Aorta (tissue), 5 donors: ENCODE measurements at regions of chr10 and their contacts with region 1.

Region 1: DNA sequence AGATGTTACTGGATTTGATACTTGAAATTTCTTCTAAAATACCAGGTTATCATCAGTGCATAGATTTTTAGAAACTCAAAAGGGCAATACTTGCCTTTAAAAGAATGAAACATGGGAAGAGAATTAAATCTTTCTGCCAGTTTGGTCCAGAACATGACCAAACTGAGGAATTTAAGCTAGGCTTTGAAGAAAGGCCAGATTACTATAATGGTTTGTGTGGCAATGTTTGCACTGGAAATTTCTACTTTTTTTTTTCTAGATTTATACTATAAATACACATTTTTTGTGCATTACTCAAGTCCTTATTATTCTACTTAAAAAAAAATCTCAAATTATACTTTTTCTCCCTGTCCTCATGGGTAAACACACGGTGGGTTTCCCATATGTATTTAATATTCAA is 9.2 kb downstream of the MKX start:
- DNase-seq: no peak
- ATAC-seq: no peak
- H3K4me3 ChIP-seq: no peak overlapping the region
- H3K27ac ChIP-seq: no peak overlapping the region
- H3K4me1 ChIP-seq: peaks cover 1 to 5% of the 10 kb centered on the region in 2 donors
- H3K27me3 ChIP-seq: no peaks in the 10 kb centered on the region

Region 2: GRCh38 chr10:27699776-27700175 is 36.6 kb before region 1 on chr10:
- intact Hi-C with region 1: no loop called
- DNase-seq: no peak
- ATAC-seq: no peak
- H3K4me3 ChIP-seq: no peak overlapping the region
- H3K27ac ChIP-seq: no peak overlapping the region
- H3K4me1 ChIP-seq: peaks cover 0 to 4% of the 10 kb centered on the region in 2 donors
- H3K27me3 ChIP-seq: no peaks in the 10 kb centered on the region

Region 3: DNA sequence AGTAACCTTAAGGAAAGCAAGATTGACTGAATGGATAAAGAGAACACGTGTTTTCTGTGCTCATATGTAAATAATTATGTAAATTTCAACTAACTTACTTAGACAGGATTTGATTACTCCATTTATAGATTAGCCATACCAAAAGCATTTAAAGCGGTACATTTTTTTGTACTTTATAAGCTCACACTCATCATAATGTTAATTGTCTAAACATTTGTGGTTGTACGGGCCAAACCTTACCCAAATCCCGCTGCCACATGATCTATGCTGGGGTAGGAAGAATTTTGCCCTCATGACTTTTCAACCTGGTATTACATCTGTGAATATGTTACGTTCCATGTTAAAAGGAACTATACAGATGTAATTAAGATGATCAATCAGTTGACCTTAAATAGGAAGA is 19.9 kb before region 1 on chr10:
- intact Hi-C with region 1: loop called in 1 of 2 experiments (anchors 2 kb)
- DNase-seq: no peak
- ATAC-seq: no peak
- H3K4me3 ChIP-seq: no peak overlapping the region
- H3K27ac ChIP-seq: no peak overlapping the region
- H3K4me1 ChIP-seq: peaks cover 7 to 17% of the 10 kb centered on the region in 2 donors
- H3K27me3 ChIP-seq: no peaks in the 10 kb centered on the region

Region 4: DNA sequence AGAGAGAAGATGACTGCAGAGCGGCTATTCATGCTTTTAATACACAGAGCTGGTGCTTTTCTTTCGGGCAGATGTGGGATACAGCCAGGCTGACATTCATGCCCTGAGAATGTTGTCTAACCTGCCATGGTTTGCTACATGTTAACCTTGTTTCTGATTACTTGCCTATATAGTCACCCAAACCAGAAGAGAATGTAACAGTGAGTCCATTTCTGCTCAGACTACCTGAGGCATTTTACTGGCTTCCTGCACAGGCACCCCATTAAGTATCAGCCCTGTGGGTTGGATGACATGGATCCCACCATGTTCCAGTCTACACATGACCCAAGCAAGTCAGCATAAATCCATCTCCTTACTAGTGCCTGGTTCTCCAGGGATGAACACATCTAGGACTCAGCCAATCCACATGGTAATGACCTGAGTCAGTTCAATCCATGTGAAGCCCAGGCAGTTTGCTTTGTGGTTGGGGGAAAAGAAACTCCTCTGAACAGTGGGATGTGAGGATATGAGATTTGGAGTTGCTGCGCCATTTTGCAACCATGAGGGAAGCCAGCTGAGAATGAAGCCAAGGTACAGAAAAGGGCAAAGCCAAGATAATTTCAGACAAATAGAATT is 64.9 kb after region 1 on chr10:
- intact Hi-C with region 1: no loop called
- DNase-seq: no peak
- ATAC-seq: no peak
- H3K4me3 ChIP-seq: no peak overlapping the region
- H3K27ac ChIP-seq: no peak overlapping the region
- H3K4me1 ChIP-seq: no peaks in the 10 kb centered on the region
- H3K27me3 ChIP-seq: no peaks in the 10 kb centered on the region

Region 5: DNA sequence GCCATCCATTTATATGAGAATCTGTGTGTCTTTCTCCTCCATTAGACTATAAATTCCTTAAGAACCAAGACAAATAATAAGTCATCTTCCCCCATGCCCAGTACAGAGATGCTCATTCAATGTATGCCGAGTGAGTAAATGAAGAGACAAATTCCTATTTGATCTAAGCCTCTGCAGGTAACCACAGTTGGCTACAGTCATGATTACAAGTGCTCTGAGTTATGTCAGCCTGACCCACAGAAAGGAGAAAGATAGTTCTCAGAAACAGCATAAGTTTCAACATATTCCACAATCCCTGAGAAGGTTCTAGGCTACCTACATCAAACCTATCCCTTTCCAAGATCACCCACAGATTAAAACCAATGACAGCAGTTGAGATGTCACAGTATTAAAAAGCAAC is 520.4 kb after region 1 on chr10:
- intact Hi-C with region 1: no loop called
- DNase-seq: no peak
- ATAC-seq: no peak
- H3K4me3 ChIP-seq: no peak overlapping the region
- H3K27ac ChIP-seq: no peak overlapping the region
- H3K4me1 ChIP-seq: peaks cover 0 to 8% of the 10 kb centered on the region in 2 donors
- H3K27me3 ChIP-seq: no peaks in the 10 kb centered on the region